Posterior vena cava (tissue), 2 donors: ENCODE measurements at regions of chrX and their contacts with region 1.

Region 1: GRCh38 chrX:99033226-99033901 is 1376.7 kb downstream of the PCDH19 start:
- DNase-seq: no peak

Region 2: GRCh38 chrX:97399400-97399799 is 1634.0 kb before region 1 on chrX:
- intact Hi-C with region 1: loop called in 1 of 2 experiments (anchors 10 kb)
- DNase-seq: no peak

Region 3: DNA sequence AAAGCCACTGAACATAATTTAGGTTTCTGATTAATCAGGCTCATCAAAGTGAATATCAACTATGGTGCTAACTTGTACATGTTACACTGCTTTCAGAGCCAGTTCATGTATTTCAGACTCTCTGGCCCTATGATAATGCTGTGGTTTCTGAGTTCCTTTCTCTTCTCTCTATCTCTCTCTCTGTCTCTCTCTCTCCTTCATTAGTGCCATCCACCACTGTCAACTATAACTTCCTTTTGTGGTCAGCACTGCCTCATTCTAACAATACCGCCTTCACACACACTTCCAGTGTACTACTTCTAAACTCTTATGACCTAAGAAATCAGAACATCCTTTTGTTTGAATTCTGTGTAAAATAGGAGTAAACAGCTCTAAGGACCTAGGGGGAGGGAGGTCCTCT is 1242.5 kb before region 1 on chrX:
- intact Hi-C with region 1: no loop called
- DNase-seq: no peak

Region 4: DNA sequence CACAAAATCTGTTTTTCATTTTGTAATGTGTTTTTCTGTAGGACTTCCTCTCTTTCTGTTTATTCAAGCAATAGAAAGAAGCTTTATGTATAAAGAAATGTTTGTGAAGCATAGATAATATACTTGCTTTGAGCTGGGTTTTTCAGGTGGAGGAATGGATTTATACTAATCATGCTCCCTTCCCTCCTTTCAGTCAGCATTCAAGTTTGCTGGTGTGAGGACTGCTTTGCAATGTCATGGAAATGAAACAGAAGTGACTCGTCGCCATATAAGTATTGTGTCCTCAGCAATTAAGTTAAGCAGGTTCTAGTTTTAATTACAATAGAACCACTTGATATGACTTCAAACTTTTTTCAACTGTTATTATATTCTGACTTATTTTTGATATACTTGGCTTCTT is 70.4 kb before region 1 on chrX:
- intact Hi-C with region 1: no loop called
- DNase-seq: no peak

Region 5: DNA sequence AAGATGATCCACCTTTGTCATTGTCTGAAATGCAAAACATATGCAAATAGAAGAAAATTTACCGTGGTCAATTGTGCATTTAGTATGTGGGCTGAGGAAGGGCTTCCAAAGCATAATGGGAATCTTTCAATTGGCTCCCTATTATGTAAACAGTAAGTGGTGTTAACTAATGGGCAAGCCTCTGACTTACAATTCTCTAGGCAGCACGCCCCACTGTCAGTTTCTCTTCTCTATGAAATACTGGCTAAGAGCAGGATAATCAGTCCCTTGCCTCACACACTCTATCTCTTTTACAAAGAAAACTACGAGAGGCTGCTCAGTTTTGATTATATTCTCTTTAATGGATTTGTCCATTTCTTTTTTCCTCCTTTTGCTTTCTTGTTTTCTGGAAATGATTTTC is 104.1 kb after region 1 on chrX:
- intact Hi-C with region 1: no loop called
- DNase-seq: no peak

Region 6: GRCh38 chrX:99184153-99184552 is 150.8 kb after region 1 on chrX:
- intact Hi-C with region 1: no loop called
- DNase-seq: no peak